Pancreas (tissue), 10 donors: ENCODE measurements at regions of chr12 and their contacts with region 1.

Region 1: DNA sequence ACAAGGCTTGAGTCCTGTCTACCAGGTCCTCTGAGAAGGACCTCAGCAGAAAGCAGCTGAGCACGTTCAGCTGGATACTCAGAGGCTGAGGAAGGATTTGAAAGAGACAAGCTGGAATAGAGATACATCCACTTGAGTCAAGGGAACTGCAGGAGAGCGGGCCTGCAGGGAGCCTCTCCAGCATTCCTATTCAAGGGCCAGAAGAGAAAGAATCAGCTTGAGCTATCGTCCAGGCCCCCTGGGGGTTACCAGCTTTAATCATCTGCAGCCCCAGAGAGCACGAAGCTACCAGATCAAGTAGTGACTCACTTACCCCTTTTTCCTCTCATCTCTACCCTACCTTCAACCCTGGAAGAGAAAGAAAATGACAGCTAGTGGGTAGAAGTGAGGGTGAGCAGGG is 80.9 kb downstream of the NDUFA12 start:
- DNase-seq: no peak
- ATAC-seq: no peak
- H3K4me3 ChIP-seq: no peak overlapping the region
- H3K27ac ChIP-seq: no peak overlapping the region
- H3K4me1 ChIP-seq: no peaks in the 10 kb centered on the region
- H3K27me3 ChIP-seq: no peaks in the 10 kb centered on the region
- CTCF ChIP-seq: no peak

Region 2: DNA sequence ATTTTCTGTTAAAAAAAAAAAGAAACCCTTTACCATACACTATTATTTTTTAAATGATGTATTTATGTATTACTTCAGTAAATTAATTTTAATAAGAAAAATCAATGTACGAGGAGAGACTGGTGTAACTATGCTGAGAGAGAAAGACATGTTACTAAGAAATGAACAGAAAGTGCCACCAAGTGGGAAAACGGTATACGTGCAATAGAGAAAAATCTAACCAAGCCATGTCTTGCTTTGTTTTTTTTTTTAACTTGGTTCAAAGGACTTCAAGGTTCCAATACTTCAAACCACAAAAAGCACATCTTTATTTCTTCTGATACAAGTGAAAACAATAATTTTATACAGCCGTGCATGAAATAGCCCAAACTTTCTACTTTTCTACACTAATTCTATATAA is 58.0 kb after region 1 on chr12:
- intact Hi-C with region 1: loop called in 1 of 3 experiments (anchors 10 kb)
- DNase-seq: no peak
- ATAC-seq: no peak
- H3K4me3 ChIP-seq: no peak overlapping the region
- H3K27ac ChIP-seq: no peak overlapping the region
- H3K4me1 ChIP-seq: no peaks in the 10 kb centered on the region
- H3K27me3 ChIP-seq: no peaks in the 10 kb centered on the region
- CTCF ChIP-seq: no peak